ENCODE measurements at regions of chr9 and their contacts with region 1.

Region 1: GRCh38 chr9:115694014-115694413 is 459.6 kb upstream of the PAPPA start:
- DNase-seq: peak; percentile 93
- ATAC-seq: peak; percentile 69
- H3K4me3 ChIP-seq: no peak overlapping the region
- H3K27ac ChIP-seq: no peak overlapping the region
- H3K4me1 ChIP-seq: peaks cover 13% of the 10 kb centered on the region
- H3K27me3 ChIP-seq: no peaks in the 10 kb centered on the region
- CTCF ChIP-seq: peak; percentile 79
- POLR2A ChIP-seq: no peak
- RAD21 ChIP-seq: peak; percentile 86

Region 2: GRCh38 chr9:115575147-115575546 is 118.9 kb before region 1 on chr9:
- CTCF ChIA-PET with region 1: no interaction called
- POLR2A ChIA-PET with region 1: no interaction called
- dilution Hi-C with region 1: no loop called
- in situ Hi-C with region 1: no loop called
- intact Hi-C with region 1: no loop called
- DNase-seq: no peak
- ATAC-seq: no peak
- H3K4me3 ChIP-seq: no peak overlapping the region
- H3K27ac ChIP-seq: no peak overlapping the region
- H3K4me1 ChIP-seq: no peaks in the 10 kb centered on the region
- H3K27me3 ChIP-seq: no peaks in the 10 kb centered on the region; the same call in 1 of the 2 replicates
- CTCF ChIP-seq: no peak
- POLR2A ChIP-seq: no peak
- RAD21 ChIP-seq: no peak

Region 3: GRCh38 chr9:115649991-115650472 is 44.0 kb before region 1 on chr9:
- CTCF ChIA-PET with region 1: no interaction called
- POLR2A ChIA-PET with region 1: no interaction called
- dilution Hi-C with region 1: no loop called
- in situ Hi-C with region 1: no loop called
- intact Hi-C with region 1: loop called (anchors 2 kb)
- DNase-seq: peak; percentile 99
- ATAC-seq: peak; percentile 75
- H3K4me3 ChIP-seq: no peak overlapping the region
- H3K27ac ChIP-seq: peak overlapping the region; percentile 86
- H3K4me1 ChIP-seq: peaks cover 12% of the 10 kb centered on the region
- H3K27me3 ChIP-seq: no peaks in the 10 kb centered on the region
- CTCF ChIP-seq: no peak
- POLR2A ChIP-seq: peak; percentile 44
- RAD21 ChIP-seq: peak; percentile 35; the same call in 1 of the 2 replicates

Region 4: GRCh38 chr9:116000748-116001329 is 306.8 kb after region 1 on chr9:
- CTCF ChIA-PET with region 1: no interaction called
- POLR2A ChIA-PET with region 1: no interaction called
- dilution Hi-C with region 1: no loop called
- in situ Hi-C with region 1: no loop called
- intact Hi-C with region 1: loop called (anchors 10 kb)
- DNase-seq: no peak
- ATAC-seq: no peak
- H3K4me3 ChIP-seq: no peak overlapping the region
- H3K27ac ChIP-seq: no peak overlapping the region
- H3K4me1 ChIP-seq: peaks cover 18% of the 10 kb centered on the region
- H3K27me3 ChIP-seq: no peaks in the 10 kb centered on the region
- CTCF ChIP-seq: peak; percentile 34
- POLR2A ChIP-seq: no peak
- RAD21 ChIP-seq: no peak; the same call in 1 of the 2 replicates

Region 5: GRCh38 chr9:116208417-116209232 is 514.6 kb after region 1 on chr9:
- CTCF ChIA-PET with region 1: no interaction called
- POLR2A ChIA-PET with region 1: no interaction called
- dilution Hi-C with region 1: no loop called
- in situ Hi-C with region 1: no loop called
- intact Hi-C with region 1: loop called (anchors 1 kb)
- DNase-seq: peak; percentile 76
- ATAC-seq: peak; percentile 63
- H3K4me3 ChIP-seq: no peak overlapping the region
- H3K27ac ChIP-seq: peak overlapping the region; percentile 39; the same call in 1 of the 2 replicates
- H3K4me1 ChIP-seq: peaks cover 2% of the 10 kb centered on the region; the same call in 1 of the 2 replicates
- H3K27me3 ChIP-seq: no peaks in the 10 kb centered on the region
- CTCF ChIP-seq: peak; percentile 37
- POLR2A ChIP-seq: no peak
- RAD21 ChIP-seq: peak; percentile 50

Region 6: DNA sequence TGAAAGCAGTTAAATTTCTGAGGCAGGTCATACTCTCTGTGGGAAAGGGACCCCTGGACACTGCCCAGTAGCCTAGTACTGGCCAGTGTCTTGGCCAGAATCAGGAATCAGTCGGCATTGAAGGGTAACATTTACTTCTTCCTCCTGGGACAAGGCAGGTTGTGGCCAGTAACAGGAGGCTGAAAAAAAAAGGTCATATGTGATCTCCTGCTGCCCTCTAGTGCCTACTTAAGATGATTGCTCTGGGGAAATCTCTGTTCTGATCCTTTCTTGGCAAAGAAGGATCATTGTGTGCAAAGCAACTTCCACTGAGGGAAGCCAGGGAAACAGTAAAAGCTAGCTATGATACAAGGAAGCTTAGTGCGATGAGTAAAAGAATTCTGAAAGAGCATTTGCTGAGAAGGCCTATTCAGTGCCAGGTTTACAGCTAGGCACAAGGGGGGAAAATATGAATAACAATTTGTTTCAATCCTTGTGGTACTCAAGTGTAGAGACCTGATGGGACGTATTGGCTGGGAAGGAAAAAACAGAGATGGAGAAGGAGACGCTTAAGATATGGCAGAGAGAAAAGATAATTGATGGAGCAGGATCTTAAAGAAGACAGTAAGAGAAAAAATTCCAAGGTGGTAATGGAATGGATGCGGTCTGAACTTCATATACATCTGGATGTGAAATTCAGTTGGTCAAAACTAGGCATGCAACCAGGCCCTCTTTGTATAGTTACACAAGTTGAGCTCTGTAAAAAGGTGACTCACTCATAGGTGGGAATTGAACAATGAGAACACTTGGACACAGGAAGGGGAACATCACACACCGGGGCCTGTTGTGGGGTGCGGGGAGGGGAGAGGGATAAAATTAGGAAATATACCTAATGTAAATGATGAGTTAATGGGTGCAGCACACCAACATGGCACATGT is 967.3 kb after region 1 on chr9:
- CTCF ChIA-PET with region 1: no interaction called
- POLR2A ChIA-PET with region 1: no interaction called
- dilution Hi-C with region 1: no loop called
- in situ Hi-C with region 1: no loop called
- intact Hi-C with region 1: loop called (anchors 5 kb)
- DNase-seq: peak; percentile 84
- ATAC-seq: peak; percentile 86
- H3K4me3 ChIP-seq: no peak overlapping the region
- H3K27ac ChIP-seq: no peak overlapping the region
- H3K4me1 ChIP-seq: peaks cover 3% of the 10 kb centered on the region; the same call in 1 of the 2 replicates
- H3K27me3 ChIP-seq: no peaks in the 10 kb centered on the region; the same call in 1 of the 2 replicates
- CTCF ChIP-seq: peak; percentile 82
- POLR2A ChIP-seq: no peak
- RAD21 ChIP-seq: peak; percentile 86

Measured in IMR-90 (cell line).